ENCODE measurements at regions of chr5 and their contacts with region 1.

Region 1: GRCh38 chr5:161432798-161433197 is 113.7 kb downstream of the GABRB2 start:
- DNase-seq: no peak
- H3K4me3 Mint-ChIP-seq: no peak overlapping the region
- H3K27ac Mint-ChIP-seq: no peak overlapping the region
- H3K4me1 Mint-ChIP-seq: no peaks in the 10 kb centered on the region
- H3K27me3 Mint-ChIP-seq: no peaks in the 10 kb centered on the region

Region 2: DNA sequence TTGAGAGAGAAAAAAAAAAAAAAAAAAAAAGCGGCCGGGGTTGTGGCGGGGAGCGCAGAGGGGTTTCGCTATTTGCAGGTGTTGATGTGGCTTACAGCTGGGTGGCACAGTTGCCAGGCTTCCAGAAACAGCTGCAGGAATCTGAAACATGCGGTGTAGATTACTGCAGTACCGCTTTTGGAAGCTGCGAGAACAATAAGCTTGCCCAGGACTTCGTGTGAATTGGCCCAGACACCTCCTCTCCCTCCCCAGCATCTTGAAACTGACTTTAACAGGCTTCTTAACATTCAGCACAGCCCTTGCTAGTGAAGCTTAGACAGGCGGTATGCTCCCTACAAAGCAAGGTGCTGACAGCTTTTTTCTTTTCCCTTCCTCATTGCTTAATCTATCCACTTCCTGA is 684.8 kb before region 1 on chr5:
- intact Hi-C with region 1: loop called (anchors 5 kb)
- DNase-seq: no peak
- H3K4me3 Mint-ChIP-seq: no peak overlapping the region
- H3K27ac Mint-ChIP-seq: no peak overlapping the region
- H3K4me1 Mint-ChIP-seq: peaks cover 6% of the 10 kb centered on the region
- H3K27me3 Mint-ChIP-seq: peaks cover 9% of the 10 kb centered on the region

Region 3: GRCh38 chr5:160843240-160843639 is 589.6 kb before region 1 on chr5:
- intact Hi-C with region 1: no loop called
- DNase-seq: no peak
- H3K4me3 Mint-ChIP-seq: no peak overlapping the region
- H3K27ac Mint-ChIP-seq: no peak overlapping the region
- H3K4me1 Mint-ChIP-seq: no peaks in the 10 kb centered on the region
- H3K27me3 Mint-ChIP-seq: peaks cover 4% of the 10 kb centered on the region

Measured in activated T-helper 1 cell treated with anti-CD3 and anti-CD28 coated beads, Interleukin-12 subunit alpha, Interleukin-12 subunit beta, Interleukin-2, Interleukin-4 antibody, amounts not matched to agents 30 ng/mL and 10 ng/mL and 1 ng/mL, durations not matched to agents 14 hours and 24 hours and 36 hours (primary cell).